ENCODE measurements at regions of chr6 and their contacts with region 1.

Region 1: GRCh38 chr6:110609101-110609500 is 132.7 kb upstream of the SLC22A16 start:
- DNase-seq: no peak
- ATAC-seq: no peak
- H3K4me3 ChIP-seq: no peak overlapping the region
- H3K4me3 Mint-ChIP-seq: no peak overlapping the region
- H3K27ac ChIP-seq: no peak overlapping the region
- H3K27ac Mint-ChIP-seq: no peak overlapping the region
- H3K4me1 ChIP-seq: no peaks in the 10 kb centered on the region
- H3K4me1 Mint-ChIP-seq: no peaks in the 10 kb centered on the region
- H3K27me3 ChIP-seq: no peaks in the 10 kb centered on the region
- H3K27me3 Mint-ChIP-seq: no peaks in the 10 kb centered on the region

Region 2: DNA sequence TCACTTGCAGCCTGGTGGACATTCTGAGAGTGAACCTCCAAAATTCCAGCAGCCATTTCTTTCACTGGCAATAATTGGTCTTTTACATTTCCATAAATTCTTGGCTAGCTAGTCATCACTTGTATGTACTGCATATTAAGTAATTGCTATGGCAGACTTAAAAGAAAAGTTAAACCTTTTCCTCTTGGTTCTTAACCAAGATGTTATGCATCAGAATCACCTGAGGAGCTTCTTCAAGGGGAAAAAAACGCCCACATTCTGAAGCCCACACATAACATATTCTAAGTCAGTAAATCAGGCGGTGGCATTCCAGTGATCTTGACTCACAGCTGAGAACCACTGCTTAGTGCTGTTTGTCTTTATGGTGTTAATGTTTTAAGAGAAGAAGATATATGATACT is 391.8 kb before region 1 on chr6:
- CTCF ChIA-PET with region 1: no interaction called
- POLR2A ChIA-PET with region 1: interaction called in 1 of 2 experiments, 10 read pairs
- DNase-seq: no peak
- ATAC-seq: no peak
- H3K4me3 ChIP-seq: no peak overlapping the region
- H3K4me3 Mint-ChIP-seq: no peak overlapping the region
- H3K27ac ChIP-seq: no peak overlapping the region
- H3K27ac Mint-ChIP-seq: no peak overlapping the region
- H3K4me1 ChIP-seq: no peaks in the 10 kb centered on the region
- H3K4me1 Mint-ChIP-seq: no peaks in the 10 kb centered on the region
- H3K27me3 ChIP-seq: no peaks in the 10 kb centered on the region
- H3K27me3 Mint-ChIP-seq: no peaks in the 10 kb centered on the region

Region 3: DNA sequence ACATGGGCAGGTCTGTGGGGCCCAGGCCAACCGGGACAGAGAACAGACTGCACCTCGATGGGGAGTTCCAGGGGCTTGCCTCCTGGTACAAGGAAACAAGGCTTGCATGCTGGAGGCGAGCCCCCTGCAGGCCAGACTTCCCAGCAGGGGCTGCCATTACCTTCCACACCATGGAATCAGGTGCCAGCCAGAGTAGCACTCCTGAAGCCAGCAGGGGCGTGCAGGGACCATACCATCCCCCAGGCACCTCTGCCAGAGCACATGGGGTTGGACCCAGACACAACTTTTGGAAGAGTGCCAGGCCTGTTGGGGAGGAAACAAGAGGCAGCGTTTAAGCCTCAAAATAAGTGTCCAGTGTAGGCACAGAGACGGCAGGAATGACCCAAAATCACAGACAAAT is 200.2 kb before region 1 on chr6:
- CTCF ChIA-PET with region 1: no interaction called
- POLR2A ChIA-PET with region 1: no interaction called
- DNase-seq: no peak
- ATAC-seq: no peak
- H3K4me3 ChIP-seq: no peak overlapping the region
- H3K4me3 Mint-ChIP-seq: no peak overlapping the region
- H3K27ac ChIP-seq: no peak overlapping the region
- H3K27ac Mint-ChIP-seq: no peak overlapping the region
- H3K4me1 ChIP-seq: no peaks in the 10 kb centered on the region
- H3K4me1 Mint-ChIP-seq: no peaks in the 10 kb centered on the region
- H3K27me3 ChIP-seq: peaks cover 0 to 4% of the 10 kb centered on the region in 2 experiments
- H3K27me3 Mint-ChIP-seq: peaks cover 4 to 8% of the 10 kb centered on the region in 2 donors

Region 4: GRCh38 chr6:111038534-111039252 is 429.6 kb after region 1 on chr6:
- CTCF ChIA-PET with region 1: no interaction called
- POLR2A ChIA-PET with region 1: interaction called in 1 of 2 experiments, 12 read pairs
- DNase-seq: no peak
- ATAC-seq: no peak
- H3K4me3 ChIP-seq: no peak overlapping the region
- H3K4me3 Mint-ChIP-seq: no peak overlapping the region
- H3K27ac ChIP-seq: no peak overlapping the region
- H3K27ac Mint-ChIP-seq: no peak overlapping the region
- H3K4me1 ChIP-seq: no peaks in the 10 kb centered on the region
- H3K4me1 Mint-ChIP-seq: no peaks in the 10 kb centered on the region
- H3K27me3 ChIP-seq: peaks cover 0 to 3% of the 10 kb centered on the region in 2 experiments
- H3K27me3 Mint-ChIP-seq: peaks cover 4 to 8% of the 10 kb centered on the region in 2 donors

Region 5: GRCh38 chr6:112010328-112010727 is 1401.2 kb after region 1 on chr6:
- CTCF ChIA-PET with region 1: no interaction called
- POLR2A ChIA-PET with region 1: no interaction called
- DNase-seq: peak in 2 of 35 experiments; percentile 43 to 58
- ATAC-seq: peak; percentile 73 to 89 (median 86)
- H3K4me3 ChIP-seq: no peak overlapping the region
- H3K4me3 Mint-ChIP-seq: no peak overlapping the region
- H3K27ac ChIP-seq: no peak overlapping the region
- H3K27ac Mint-ChIP-seq: peak overlapping the region in 1 of 2 donors; percentile 2
- H3K4me1 ChIP-seq: peaks cover 2 to 3% of the 10 kb centered on the region in 2 experiments
- H3K4me1 Mint-ChIP-seq: peaks cover 9 to 13% (median 9%) of the 10 kb centered on the region in 3 donors
- H3K27me3 ChIP-seq: no peaks in the 10 kb centered on the region
- H3K27me3 Mint-ChIP-seq: no peaks in the 10 kb centered on the region

Measured in T-cell (primary cell).